Activated CD8-positive, alpha-beta T cell treated with anti-CD3 and anti-CD28 coated beads, Interleukin-2, amount 10 ng/mL, durations not matched to agents 7 days and 5 days (primary cell): ENCODE measurements at regions of chr19 and their contacts with region 1.

Region 1: GRCh38 chr19:48795055-48795684 is 15.7 kb downstream of the BCAT2 start:
- DNase-seq: peak; percentile 89
- ATAC-seq: peak; percentile 98
- H3K4me3 Mint-ChIP-seq: peak overlapping the region; percentile 84
- H3K27ac Mint-ChIP-seq: peak overlapping the region; percentile 85
- H3K4me1 Mint-ChIP-seq: peaks cover 8% of the 10 kb centered on the region
- H3K27me3 Mint-ChIP-seq: no peaks in the 10 kb centered on the region

Region 2: GRCh38 chr19:48646001-48646721 is 149.0 kb before region 1 on chr19 and contains the start of gene CA11:
- CTCF ChIA-PET with region 1: interaction called, 20 read pairs
- POLR2A ChIA-PET with region 1: no interaction called
- DNase-seq: peak; percentile 93
- ATAC-seq: peak; percentile 90
- H3K4me3 Mint-ChIP-seq: peak within 1 kb of the TSS; percentile 79
- H3K27ac Mint-ChIP-seq: peak within 1 kb of the TSS; percentile 76
- H3K4me1 Mint-ChIP-seq: peaks cover 46% of the 10 kb centered on the region
- H3K27me3 Mint-ChIP-seq: no peaks in the 10 kb centered on the region
- total RNA-seq, gene CA11: 5.2 to 6.3 TPM

Region 3: GRCh38 chr19:48668332-48668731 is 126.8 kb before region 1 on chr19:
- CTCF ChIA-PET with region 1: no interaction called
- POLR2A ChIA-PET with region 1: no interaction called
- DNase-seq: no peak
- ATAC-seq: no peak
- H3K4me3 Mint-ChIP-seq: no peak overlapping the region
- H3K27ac Mint-ChIP-seq: no peak overlapping the region
- H3K4me1 Mint-ChIP-seq: no peaks in the 10 kb centered on the region
- H3K27me3 Mint-ChIP-seq: peaks cover 2% of the 10 kb centered on the region

Region 4: DNA sequence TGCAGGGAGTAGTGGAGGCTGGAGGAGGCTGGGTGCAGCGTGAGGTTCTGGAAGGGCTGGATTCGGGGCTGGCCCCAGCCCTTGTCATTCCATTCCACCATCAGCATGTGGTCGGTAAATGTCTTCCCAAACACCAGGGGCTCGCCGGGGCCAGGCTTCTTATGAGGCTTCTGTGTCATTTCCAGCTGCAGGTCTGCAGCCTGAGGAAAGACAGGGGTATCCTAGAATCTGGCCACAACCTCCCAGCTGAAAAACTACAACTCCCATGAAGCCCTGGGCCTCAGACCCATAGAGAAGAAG is 11.3 kb after region 1 on chr19:
- CTCF ChIA-PET with region 1: interaction called, 72 read pairs
- POLR2A ChIA-PET with region 1: interaction called, 3 read pairs
- DNase-seq: no peak
- ATAC-seq: peak; percentile 33
- H3K4me3 Mint-ChIP-seq: no peak overlapping the region
- H3K27ac Mint-ChIP-seq: peak overlapping the region; percentile 24
- H3K4me1 Mint-ChIP-seq: peaks cover 22% of the 10 kb centered on the region
- H3K27me3 Mint-ChIP-seq: no peaks in the 10 kb centered on the region

Region 5: GRCh38 chr19:48826606-48827020 is 31.4 kb after region 1 on chr19:
- CTCF ChIA-PET with region 1: interaction called, 50 read pairs
- POLR2A ChIA-PET with region 1: no interaction called
- DNase-seq: no peak
- ATAC-seq: no peak
- H3K4me3 Mint-ChIP-seq: no peak overlapping the region
- H3K27ac Mint-ChIP-seq: no peak overlapping the region
- H3K4me1 Mint-ChIP-seq: no peaks in the 10 kb centered on the region
- H3K27me3 Mint-ChIP-seq: no peaks in the 10 kb centered on the region

Region 6: GRCh38 chr19:48842789-48843162 is 47.6 kb after region 1 on chr19:
- CTCF ChIA-PET with region 1: interaction called, 127 read pairs
- POLR2A ChIA-PET with region 1: no interaction called
- DNase-seq: peak; percentile 72
- ATAC-seq: peak; percentile 57
- H3K4me3 Mint-ChIP-seq: no peak overlapping the region
- H3K27ac Mint-ChIP-seq: no peak overlapping the region
- H3K4me1 Mint-ChIP-seq: peaks cover 2% of the 10 kb centered on the region
- H3K27me3 Mint-ChIP-seq: no peaks in the 10 kb centered on the region

Region 7: GRCh38 chr19:48858984-48859710 is 64.0 kb after region 1 on chr19:
- CTCF ChIA-PET with region 1: no interaction called
- POLR2A ChIA-PET with region 1: no interaction called
- DNase-seq: peak; percentile 88
- ATAC-seq: peak; percentile 92
- H3K4me3 Mint-ChIP-seq: peak overlapping the region; percentile 83
- H3K27ac Mint-ChIP-seq: peak overlapping the region; percentile 89
- H3K4me1 Mint-ChIP-seq: peaks cover 4% of the 10 kb centered on the region
- H3K27me3 Mint-ChIP-seq: no peaks in the 10 kb centered on the region

Region 8: DNA sequence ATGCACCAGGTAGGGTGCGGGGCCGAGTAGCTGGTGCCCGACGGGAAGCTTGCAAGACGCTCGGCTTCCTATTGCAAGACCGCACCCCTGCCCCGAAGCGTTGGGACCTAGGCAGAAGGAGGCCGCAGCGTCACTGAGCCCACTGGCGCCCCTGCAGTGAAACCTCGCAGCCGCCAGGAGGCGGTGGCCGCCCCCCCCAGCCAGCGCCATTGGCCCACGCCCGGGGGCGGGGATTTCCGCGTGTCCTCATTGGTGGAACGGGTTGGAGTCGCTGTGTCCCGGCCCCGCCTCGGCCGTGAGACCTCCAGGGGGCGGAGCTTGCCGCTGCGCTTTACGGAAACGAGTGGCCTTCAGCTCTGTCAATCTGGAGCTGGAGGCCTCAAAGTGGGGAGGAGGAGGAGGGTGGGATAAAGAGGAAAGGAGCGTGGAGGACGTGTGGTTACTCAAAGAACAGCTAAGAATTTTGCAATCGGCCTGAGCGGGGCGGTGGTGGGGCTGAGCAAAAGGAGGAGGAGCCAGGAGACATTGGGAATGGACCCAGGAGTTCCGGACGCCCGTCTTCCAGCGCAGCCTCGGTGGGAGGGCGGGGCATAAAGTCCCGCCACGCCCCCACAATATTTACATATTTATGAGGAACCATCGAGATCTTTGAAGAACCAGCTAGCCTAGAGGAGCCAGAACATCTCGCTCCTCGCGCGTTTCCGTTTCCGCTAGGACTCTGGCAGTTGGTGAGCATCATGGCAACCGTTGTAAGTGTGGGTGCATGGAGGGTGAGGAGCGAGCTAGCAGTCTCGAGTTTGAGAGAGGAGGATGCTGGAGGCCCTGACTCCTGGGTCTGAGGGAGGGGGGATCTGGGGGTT is 198.2 kb after region 1 on chr19 and contains the starts of genes GYS1 and RUVBL2:
- CTCF ChIA-PET with region 1: interaction called, 16 read pairs
- POLR2A ChIA-PET with region 1: no interaction called
- DNase-seq: peak; percentile 99
- ATAC-seq: peak; percentile 95
- H3K4me3 Mint-ChIP-seq: peak within 1 kb of the TSS; percentile 92
- H3K27ac Mint-ChIP-seq: peak within 1 kb of the TSS; percentile 96
- H3K4me1 Mint-ChIP-seq: peaks cover 51% of the 10 kb centered on the region
- H3K27me3 Mint-ChIP-seq: no peaks in the 10 kb centered on the region
- total RNA-seq, gene GYS1: 54.7 to 57.9 TPM
- total RNA-seq, gene RUVBL2: 105 to 106 TPM